Activated CD8-positive, alpha-beta T cell treated with anti-CD3 and anti-CD28 coated beads, Interleukin-2, amount 10 ng/mL, durations not matched to agents 7 days and 5 days (primary cell): ENCODE measurements at regions of chr7 and their contacts with region 1.

Region 1: DNA sequence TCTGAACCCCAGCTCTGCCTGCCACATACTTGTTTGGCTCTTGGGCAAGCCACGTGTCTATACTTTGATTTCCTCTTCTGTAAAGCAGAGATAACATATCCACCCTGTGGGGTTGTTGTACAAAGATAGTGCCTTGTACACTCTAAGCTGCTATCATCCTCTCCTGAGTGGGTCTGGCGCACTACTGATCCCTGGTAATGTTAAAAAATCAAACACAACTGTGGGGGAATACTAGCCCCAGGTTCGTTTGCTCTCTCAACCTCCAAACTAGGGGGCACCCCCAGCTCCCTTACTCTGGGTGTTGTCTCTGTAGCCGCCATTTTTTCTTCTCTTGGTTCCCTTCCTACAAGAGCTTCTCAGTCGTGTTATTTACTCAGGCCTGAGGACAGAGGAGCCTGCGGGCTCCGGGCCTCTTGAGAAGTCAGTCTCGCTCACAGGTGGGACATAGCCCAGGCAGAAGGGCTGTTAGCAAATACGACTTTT is 1.0 kb downstream of the POLM start:
- DNase-seq: peak; percentile 54
- ATAC-seq: no peak
- H3K4me3 Mint-ChIP-seq: peak overlapping the region; percentile 90
- H3K27ac Mint-ChIP-seq: peak overlapping the region; percentile 91
- H3K4me1 Mint-ChIP-seq: peaks cover 56% of the 10 kb centered on the region
- H3K27me3 Mint-ChIP-seq: no peaks in the 10 kb centered on the region

Region 2: GRCh38 chr7:44044315-44045225 is 36.7 kb before region 1 on chr7 and contains the start of gene DBNL:
- CTCF ChIA-PET with region 1: interaction called, 4 read pairs
- POLR2A ChIA-PET with region 1: interaction called, 15 read pairs
- DNase-seq: peak; percentile 95
- ATAC-seq: peak; percentile 71
- H3K4me3 Mint-ChIP-seq: peak within 1 kb of the TSS; percentile 94
- H3K27ac Mint-ChIP-seq: peak within 1 kb of the TSS; percentile 90
- H3K4me1 Mint-ChIP-seq: peaks cover 48% of the 10 kb centered on the region
- H3K27me3 Mint-ChIP-seq: no peaks in the 10 kb centered on the region
- total RNA-seq, gene DBNL: 165 to 166 TPM

Region 3: DNA sequence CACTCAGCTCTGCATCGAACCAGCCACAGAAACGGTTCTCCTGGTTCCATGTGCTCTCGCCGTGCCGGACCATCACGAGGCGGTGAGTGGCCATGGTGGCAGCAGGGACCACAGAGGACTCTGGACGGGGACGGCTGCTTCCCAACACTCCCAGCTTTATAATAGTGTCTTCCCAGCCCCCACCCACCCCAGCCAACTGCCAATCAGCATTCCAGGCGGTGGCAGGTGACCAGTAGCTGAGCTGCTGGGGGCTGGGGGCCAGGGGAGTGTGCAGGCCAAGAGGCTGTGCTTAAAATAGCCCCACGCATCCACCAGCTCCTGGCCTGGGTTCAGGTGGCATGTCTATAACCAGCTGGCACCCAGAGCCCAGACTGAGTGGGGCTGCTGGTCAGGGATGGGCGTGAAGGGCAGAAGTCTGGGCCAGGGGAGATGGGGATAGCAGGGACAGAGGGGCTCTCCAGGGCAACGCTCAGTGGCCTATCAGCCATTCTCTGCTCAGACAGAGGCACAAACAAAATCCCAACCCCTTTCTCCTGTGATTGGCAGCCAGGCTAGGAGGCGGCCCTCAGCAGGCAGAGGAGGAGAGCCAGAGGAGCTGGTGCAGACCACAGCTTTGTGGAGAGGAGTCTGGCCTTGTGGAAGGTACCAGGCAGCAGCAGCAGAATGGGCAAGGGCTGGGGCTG is 15.7 kb before region 1 on chr7 and contains the start of gene PGAM2:
- CTCF ChIA-PET with region 1: interaction called, 5 read pairs
- POLR2A ChIA-PET with region 1: interaction called, 17 read pairs
- DNase-seq: no peak
- ATAC-seq: peak; percentile 42
- H3K4me3 Mint-ChIP-seq: no peak within 1 kb of the TSS
- H3K27ac Mint-ChIP-seq: peak within 1 kb of the TSS; percentile 49
- H3K4me1 Mint-ChIP-seq: peaks cover 12% of the 10 kb centered on the region
- H3K27me3 Mint-ChIP-seq: no peaks in the 10 kb centered on the region
- total RNA-seq, gene PGAM2: 0.34 to 0.68 TPM

Region 4: DNA sequence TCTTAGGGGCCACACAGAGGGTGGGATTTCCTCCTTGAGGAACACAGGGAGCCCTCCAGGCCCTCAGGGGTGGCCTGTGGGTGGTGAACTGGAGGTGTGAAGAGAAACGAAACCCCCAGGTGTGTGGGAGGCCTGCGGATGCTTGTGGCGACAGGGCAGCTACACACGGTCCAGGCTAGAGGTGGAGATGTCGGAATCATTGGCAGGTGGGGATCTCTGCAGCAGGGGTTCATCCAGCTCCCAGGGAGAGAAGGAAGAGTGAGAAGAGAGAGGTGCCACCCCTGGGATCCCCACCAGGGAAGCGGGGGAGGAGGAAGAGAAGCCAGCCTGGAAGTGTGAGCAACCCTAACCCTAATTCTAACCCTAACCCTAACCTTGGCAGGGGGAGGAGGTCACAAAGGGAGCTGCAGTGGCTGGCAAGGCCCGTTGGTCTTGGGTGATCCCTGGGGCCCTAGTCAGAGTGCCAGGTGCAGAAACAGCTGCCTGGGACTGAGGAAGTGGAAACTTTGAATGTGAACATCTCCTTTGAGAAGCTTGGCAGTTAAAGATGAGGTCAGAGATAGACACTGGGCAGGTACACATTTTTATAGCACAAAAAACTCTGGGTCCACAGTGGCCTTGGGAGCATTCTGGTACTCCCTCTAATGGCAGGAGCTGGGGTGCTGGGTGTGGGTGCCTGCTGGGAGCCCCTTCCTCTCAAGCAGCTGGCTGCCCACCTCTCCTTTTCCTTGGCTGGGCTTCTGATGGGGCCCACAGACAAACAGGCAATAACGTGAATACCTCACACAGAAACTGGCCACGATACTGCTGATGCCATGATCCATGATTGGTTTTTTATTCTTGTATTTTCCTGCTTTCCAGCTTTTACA is 16.0 kb after region 1 on chr7:
- CTCF ChIA-PET with region 1: interaction called, 18 read pairs
- POLR2A ChIA-PET with region 1: interaction called, 9 read pairs
- DNase-seq: peak; percentile 57
- ATAC-seq: peak; percentile 74
- H3K4me3 Mint-ChIP-seq: no peak overlapping the region
- H3K27ac Mint-ChIP-seq: peak overlapping the region; percentile 81
- H3K4me1 Mint-ChIP-seq: peaks cover 32% of the 10 kb centered on the region
- H3K27me3 Mint-ChIP-seq: peaks cover 3% of the 10 kb centered on the region